Esophagus squamous epithelium (tissue), 5 donors: ENCODE measurements at regions of chr10 and their contacts with region 1.

Region 1: GRCh38 chr10:47047671-47048525 is 136.7 kb downstream of the PTPN20 start:
- DNase-seq: peak; percentile 11
- H3K4me3 ChIP-seq: no peak overlapping the region
- H3K27ac ChIP-seq: no peak overlapping the region
- H3K4me1 ChIP-seq: peaks cover 0 to 8% (median 0%) of the 10 kb centered on the region in 3 donors
- H3K27me3 ChIP-seq: no peaks in the 10 kb centered on the region
- CTCF ChIP-seq: peak; percentile 77 to 92 (median 87)
- POLR2A ChIP-seq: no peak

Region 2: GRCh38 chr10:46992803-46993561 is 54.9 kb before region 1 on chr10:
- intact Hi-C with region 1: no loop called
- DNase-seq: no peak
- H3K4me3 ChIP-seq: no peak overlapping the region
- H3K27ac ChIP-seq: peak overlapping the region in 2 of 4 donors; percentile 50 to 77
- H3K4me1 ChIP-seq: no peaks in the 10 kb centered on the region
- H3K27me3 ChIP-seq: no peaks in the 10 kb centered on the region
- CTCF ChIP-seq: peak in 3 of 6 experiments; percentile 8 to 40 (median 12)
- POLR2A ChIP-seq: no peak

Region 3: GRCh38 chr10:47189802-47190700 is 142.2 kb after region 1 on chr10:
- intact Hi-C with region 1: no loop called
- DNase-seq: no peak
- H3K4me3 ChIP-seq: no peak overlapping the region
- H3K27ac ChIP-seq: no peak overlapping the region
- H3K4me1 ChIP-seq: no peaks in the 10 kb centered on the region
- H3K27me3 ChIP-seq: no peaks in the 10 kb centered on the region
- CTCF ChIP-seq: no peak
- POLR2A ChIP-seq: no peak

Region 4: DNA sequence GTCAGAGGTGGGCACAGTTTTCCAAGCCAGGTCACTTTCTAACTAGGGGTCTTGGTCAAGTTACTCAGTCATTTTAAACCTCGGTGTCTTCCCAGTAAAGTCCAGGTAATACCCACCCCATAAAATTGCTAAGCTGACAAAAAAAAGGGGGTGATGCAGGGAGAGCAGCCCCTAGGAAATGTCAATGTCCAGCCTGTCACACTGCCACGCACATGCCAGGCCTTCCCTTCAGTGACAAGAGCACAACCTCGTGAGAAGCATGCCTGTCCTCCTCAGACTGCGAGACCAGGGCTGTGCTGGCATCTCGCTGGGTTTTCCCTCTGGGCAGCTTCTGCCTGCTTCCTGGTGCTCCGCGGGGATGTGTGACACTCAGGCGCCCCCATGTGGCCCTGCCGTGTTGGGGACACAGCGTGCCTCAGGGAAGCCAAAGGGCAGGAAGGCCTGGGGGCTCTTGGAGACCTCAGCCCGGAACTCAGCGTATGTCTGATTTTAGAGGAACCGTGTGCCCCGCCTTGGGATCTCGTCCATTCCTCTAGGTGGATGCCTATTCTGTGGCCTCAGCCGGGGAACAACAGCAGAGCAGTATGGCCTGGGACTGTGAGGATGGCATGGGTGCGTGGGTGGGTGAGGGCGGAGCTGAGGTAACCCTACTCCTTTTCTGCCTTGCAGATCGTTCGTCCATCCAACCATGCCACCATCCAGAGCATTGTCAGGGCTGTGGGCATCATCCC is 264.2 kb after region 1 on chr10:
- intact Hi-C with region 1: loop called (anchors 5 kb)
- DNase-seq: peak; percentile 16
- H3K4me3 ChIP-seq: no peak overlapping the region
- H3K27ac ChIP-seq: peak overlapping the region in 1 of 4 donors; percentile 6
- H3K4me1 ChIP-seq: peaks cover 10 to 16% (median 11%) of the 10 kb centered on the region in 3 donors
- H3K27me3 ChIP-seq: peaks cover 0 to 15% (median 0%) of the 10 kb centered on the region in 4 donors
- CTCF ChIP-seq: peak; percentile 64 to 86 (median 78)
- POLR2A ChIP-seq: no peak